GM12878 (cell line): ENCODE measurements at regions of chr1 and their contacts with region 1.

Region 1: GRCh38 chr1:212477014-212477679 is 44.4 kb downstream of the NENF start:
- DNase-seq: peak; percentile 65
- ATAC-seq: peak; percentile 97
- H3K4me3 ChIP-seq: no peak overlapping the region
- H3K27ac ChIP-seq: no peak overlapping the region; the same call in 1 of the 2 replicates
- H3K4me1 ChIP-seq: peaks cover 6% of the 10 kb centered on the region; the same call in 1 of the 2 replicates
- H3K27me3 ChIP-seq: no peaks in the 10 kb centered on the region
- CTCF ChIP-seq: peak; percentile 94 to 97 (median 96)
- EP300 ChIP-seq: no peak
- POLR2A ChIP-seq: no peak
- RAD21 ChIP-seq: peak; percentile 90

Region 2: DNA sequence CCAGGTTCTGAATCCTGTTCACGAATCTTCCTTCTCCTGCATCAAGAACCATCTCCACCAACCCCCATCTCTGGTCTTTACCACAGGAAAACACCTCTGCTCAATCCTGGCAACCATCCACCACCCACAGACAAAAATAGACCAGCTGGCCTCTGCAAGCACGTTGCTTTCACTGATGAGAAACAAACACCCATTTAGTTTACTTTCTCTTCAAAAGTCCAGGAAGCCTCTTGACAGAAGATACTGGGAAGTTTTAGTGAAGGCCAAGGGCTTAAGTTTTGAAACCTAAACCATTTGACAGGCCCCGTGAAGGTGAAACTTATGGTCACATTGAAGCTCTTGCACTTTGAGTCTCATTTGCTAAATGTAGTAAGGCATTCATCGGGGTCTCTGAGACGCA is 314.5 kb before region 1 on chr1:
- CTCF ChIA-PET with region 1: no interaction called
- POLR2A ChIA-PET with region 1: no interaction called
- RAD21 ChIA-PET with region 1: no interaction called
- SMC1A ChIA-PET with region 1: no interaction called
- in situ Hi-C with region 1: no loop called
- intact Hi-C with region 1: no loop called
- DNase-seq: peak; percentile 79
- ATAC-seq: peak; percentile 59
- H3K4me3 ChIP-seq: no peak overlapping the region
- H3K27ac ChIP-seq: peak overlapping the region; percentile 45
- H3K4me1 ChIP-seq: peaks cover 47% of the 10 kb centered on the region
- H3K27me3 ChIP-seq: no peaks in the 10 kb centered on the region
- CTCF ChIP-seq: no peak
- EP300 ChIP-seq: peak in 1 of 2 experiments; percentile 70; a peak in 2 of 4 replicates
- POLR2A ChIP-seq: no peak
- RAD21 ChIP-seq: no peak

Region 3: DNA sequence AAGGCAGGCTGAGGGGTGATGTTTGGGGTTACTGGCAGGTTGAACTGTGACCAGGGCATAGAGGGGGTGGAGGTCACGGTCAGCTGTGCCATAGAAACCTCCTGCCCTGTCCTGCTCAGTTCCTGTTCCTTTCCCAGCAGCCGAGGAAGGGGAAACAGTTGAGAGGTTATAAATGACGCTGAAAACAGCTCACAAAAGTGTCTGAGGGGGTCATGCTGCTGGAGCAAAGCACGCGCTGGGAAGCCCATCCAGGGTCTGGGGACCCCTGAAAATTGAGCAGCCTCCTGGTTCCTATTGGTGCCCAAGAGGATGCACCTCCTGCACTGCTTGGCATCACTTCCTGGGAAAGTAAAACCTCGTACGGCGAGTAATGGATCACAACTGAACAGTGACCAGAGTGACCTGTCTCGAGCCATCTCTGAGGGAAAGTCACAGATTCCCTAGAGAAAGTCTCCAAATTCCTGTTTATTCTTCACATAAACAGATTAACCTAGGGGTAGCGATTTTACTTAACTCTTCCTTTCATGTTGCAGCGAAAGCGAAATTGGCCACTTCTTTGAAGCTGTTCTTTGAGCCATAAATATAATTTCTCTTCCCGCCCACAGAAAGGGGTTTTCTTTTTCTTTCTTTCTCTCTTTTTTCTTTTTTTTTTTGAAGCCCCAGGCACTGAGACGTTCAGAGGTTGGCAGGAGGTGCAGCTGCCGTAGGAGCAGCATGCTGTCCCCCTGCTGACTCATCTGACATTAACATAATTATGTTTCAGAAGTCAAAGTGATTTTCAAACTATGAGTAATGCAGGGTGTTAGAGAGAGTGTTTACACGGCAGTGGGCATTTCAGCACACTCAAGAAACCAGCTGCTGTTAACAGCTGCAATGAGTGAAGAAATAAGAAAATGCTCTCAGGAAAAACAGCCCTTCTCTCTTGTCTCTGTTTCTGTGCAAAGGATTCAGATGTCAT is 89.7 kb after region 1 on chr1:
- CTCF ChIA-PET with region 1: interaction called, 10 read pairs
- POLR2A ChIA-PET with region 1: interaction called, 4 read pairs
- RAD21 ChIA-PET with region 1: interaction called, 16 read pairs
- SMC1A ChIA-PET with region 1: interaction called, 19 read pairs
- in situ Hi-C with region 1: no loop called
- intact Hi-C with region 1: loop called (anchors 5 kb)
- DNase-seq: peak; percentile 92
- ATAC-seq: peak; percentile 98
- H3K4me3 ChIP-seq: peak overlapping the region; percentile 58
- H3K27ac ChIP-seq: peak overlapping the region; percentile 72
- H3K4me1 ChIP-seq: peaks cover 20% of the 10 kb centered on the region
- H3K27me3 ChIP-seq: no peaks in the 10 kb centered on the region
- CTCF ChIP-seq: no peak
- EP300 ChIP-seq: peak; percentile 93
- POLR2A ChIP-seq: 0 out of 2 replicates have a peak, but pooled peaks have one; percentile 27
- RAD21 ChIP-seq: no peak

Region 4: DNA sequence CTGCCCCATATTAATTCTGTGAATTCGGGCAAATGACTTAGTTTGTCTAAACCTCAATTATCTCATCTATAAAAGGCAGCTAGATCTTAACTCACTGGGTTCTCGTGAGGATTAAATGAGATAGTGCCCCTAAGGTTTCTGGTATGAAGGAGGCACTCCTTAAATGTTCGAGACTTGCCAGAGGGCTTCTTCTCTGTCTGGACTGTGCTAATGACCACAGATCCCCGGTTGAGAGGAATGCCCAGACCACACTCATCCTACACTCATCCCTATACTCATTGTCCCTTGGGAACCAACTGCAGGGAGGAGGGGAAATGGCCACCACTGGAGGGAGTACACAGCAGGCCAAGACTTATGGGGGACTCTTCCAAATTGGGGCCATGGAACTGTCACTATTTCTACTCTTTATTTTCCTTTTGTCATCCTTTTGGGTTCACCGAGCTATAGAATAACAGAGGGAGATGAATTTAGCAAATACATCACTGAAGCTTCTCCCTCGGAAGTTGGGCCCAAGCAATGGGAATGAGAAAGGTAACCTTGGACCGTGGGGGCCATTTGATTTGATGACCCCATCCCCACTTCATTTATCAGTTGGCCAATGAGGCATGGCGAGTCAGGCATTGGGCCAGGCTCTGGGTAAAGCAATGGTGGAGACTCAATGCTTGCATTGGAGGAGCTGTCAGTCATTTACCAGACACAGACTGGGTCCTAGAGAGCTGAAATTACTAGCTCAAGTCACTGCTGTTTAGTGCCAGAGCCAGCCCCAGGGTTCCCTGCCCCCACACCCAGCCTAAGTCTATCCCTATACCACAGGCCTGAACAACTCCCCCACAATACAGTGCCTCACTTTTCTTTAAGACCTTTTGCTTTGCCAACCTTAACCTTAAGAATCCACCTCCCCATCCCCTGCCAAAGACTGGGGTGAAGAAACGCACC is 136.6 kb after region 1 on chr1:
- CTCF ChIA-PET with region 1: interaction called, 38 read pairs
- POLR2A ChIA-PET with region 1: interaction called, 11 read pairs
- RAD21 ChIA-PET with region 1: interaction called, 20 read pairs
- SMC1A ChIA-PET with region 1: interaction called, 24 read pairs
- in situ Hi-C with region 1: no loop called
- intact Hi-C with region 1: loop called (anchors 1 kb)
- DNase-seq: no peak
- ATAC-seq: peak; percentile 8
- H3K4me3 ChIP-seq: peak overlapping the region; percentile 65; the same call in 1 of the 2 replicates
- H3K27ac ChIP-seq: peak overlapping the region; percentile 66
- H3K4me1 ChIP-seq: peaks cover 27% of the 10 kb centered on the region
- H3K27me3 ChIP-seq: no peaks in the 10 kb centered on the region
- CTCF ChIP-seq: no peak
- EP300 ChIP-seq: no peak
- POLR2A ChIP-seq: no peak
- RAD21 ChIP-seq: no peak

Region 5: DNA sequence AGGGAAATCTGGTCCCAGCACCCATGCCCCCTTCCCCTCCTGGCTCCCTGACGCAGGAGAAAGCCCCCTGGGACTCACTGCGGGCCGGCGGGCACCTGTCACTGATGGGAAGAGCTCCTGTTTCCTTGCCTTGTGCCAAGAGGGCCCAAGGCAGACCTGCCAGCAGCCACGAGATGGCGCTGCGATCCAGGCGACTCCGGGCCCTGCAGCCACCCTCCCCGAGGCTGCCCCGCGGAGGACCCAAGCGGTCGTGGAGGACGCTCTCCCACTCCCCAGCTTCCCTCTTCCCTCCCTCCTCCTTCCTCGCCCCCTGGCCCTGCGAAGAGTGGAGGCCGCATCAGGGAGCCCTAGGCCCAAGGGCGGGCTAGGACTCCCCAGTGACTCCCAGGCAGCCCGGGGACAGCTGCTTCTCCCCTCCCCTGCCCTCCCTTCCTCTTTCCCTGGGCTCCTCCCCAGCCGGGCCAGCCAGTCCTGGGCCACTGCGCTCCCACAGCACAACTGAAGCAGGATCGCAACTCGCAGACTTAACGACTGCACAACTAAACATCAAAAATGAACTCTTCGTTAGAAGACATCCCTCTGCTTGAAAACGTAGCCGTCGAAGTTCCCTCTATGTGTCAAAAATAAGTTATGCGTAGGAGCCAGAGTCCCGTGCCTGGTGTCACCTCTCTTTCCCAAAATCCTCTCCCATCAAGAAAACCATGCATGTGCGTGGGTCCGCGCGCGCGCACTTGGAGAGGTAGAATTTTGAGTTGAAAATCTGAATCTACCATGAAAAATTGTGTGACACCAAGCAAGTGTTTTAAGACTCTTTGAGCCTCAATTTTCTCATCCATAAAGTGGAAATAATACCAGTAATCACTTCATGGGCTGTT is 188.3 kb after region 1 on chr1:
- CTCF ChIA-PET with region 1: interaction called, 82 read pairs
- POLR2A ChIA-PET with region 1: interaction called, 4 read pairs
- RAD21 ChIA-PET with region 1: interaction called, 66 read pairs
- SMC1A ChIA-PET with region 1: interaction called, 37 read pairs
- in situ Hi-C with region 1: no loop called
- intact Hi-C with region 1: loop called (anchors 1 kb)
- DNase-seq: no peak
- ATAC-seq: peak; percentile 98
- H3K4me3 ChIP-seq: peak overlapping the region; percentile 64
- H3K27ac ChIP-seq: peak overlapping the region; percentile 33; the same call in 1 of the 2 replicates
- H3K4me1 ChIP-seq: peaks cover 24% of the 10 kb centered on the region
- H3K27me3 ChIP-seq: no peaks in the 10 kb centered on the region
- CTCF ChIP-seq: peak; percentile 90 to 98 (median 94)
- EP300 ChIP-seq: no peak
- POLR2A ChIP-seq: no peak
- RAD21 ChIP-seq: peak; percentile 94

Region 6: DNA sequence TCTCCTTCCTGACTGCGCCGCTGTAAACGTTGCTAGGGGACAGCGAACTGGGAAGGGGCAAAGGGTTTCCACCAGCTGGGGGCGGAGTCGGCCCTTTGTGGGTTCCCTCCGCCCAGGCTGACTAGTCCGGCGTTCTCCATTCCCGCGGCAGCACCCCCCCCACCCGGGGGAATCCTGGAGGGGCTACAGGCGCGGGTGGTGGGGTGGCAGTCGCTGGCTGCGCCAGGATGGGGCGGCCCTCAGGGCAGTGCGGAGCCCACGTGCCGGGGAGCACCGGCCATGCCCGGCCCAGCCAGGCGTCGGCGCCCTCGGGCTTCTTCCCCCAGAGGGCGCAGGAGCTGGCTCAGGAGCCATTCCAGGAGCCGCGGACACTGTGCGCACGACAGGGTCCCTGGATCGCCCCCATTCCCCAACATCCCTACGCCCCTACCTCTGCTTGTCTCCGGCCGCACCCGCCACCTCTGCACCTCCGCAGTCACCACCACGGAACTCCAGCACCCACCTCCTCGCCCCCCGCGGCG is 222.0 kb after region 1 on chr1:
- CTCF ChIA-PET with region 1: interaction called, 22 read pairs
- POLR2A ChIA-PET with region 1: interaction called, 4 read pairs
- RAD21 ChIA-PET with region 1: interaction called, 27 read pairs
- SMC1A ChIA-PET with region 1: interaction called, 8 read pairs
- in situ Hi-C with region 1: no loop called
- intact Hi-C with region 1: no loop called
- DNase-seq: no peak
- ATAC-seq: peak; percentile 81
- H3K4me3 ChIP-seq: peak overlapping the region; percentile 82
- H3K27ac ChIP-seq: no peak overlapping the region
- H3K4me1 ChIP-seq: peaks cover 27% of the 10 kb centered on the region
- H3K27me3 ChIP-seq: no peaks in the 10 kb centered on the region
- CTCF ChIP-seq: peak; percentile 48 to 79 (median 71)
- EP300 ChIP-seq: no peak
- POLR2A ChIP-seq: no peak
- RAD21 ChIP-seq: peak; percentile 51

Region 7: GRCh38 chr1:212909652-212910063 is 432.5 kb after region 1 on chr1:
- CTCF ChIA-PET with region 1: no interaction called
- POLR2A ChIA-PET with region 1: no interaction called
- RAD21 ChIA-PET with region 1: no interaction called
- SMC1A ChIA-PET with region 1: no interaction called
- in situ Hi-C with region 1: no loop called
- intact Hi-C with region 1: no loop called
- DNase-seq: no peak
- ATAC-seq: no peak
- H3K4me3 ChIP-seq: no peak overlapping the region
- H3K27ac ChIP-seq: no peak overlapping the region
- H3K4me1 ChIP-seq: no peaks in the 10 kb centered on the region
- H3K27me3 ChIP-seq: no peaks in the 10 kb centered on the region
- CTCF ChIP-seq: no peak
- EP300 ChIP-seq: no peak
- POLR2A ChIP-seq: no peak
- RAD21 ChIP-seq: no peak

Region 8: GRCh38 chr1:212994926-212995325 is 517.8 kb after region 1 on chr1:
- CTCF ChIA-PET with region 1: interaction called, 24 read pairs
- POLR2A ChIA-PET with region 1: no interaction called
- RAD21 ChIA-PET with region 1: no interaction called
- SMC1A ChIA-PET with region 1: interaction called, 6 read pairs
- in situ Hi-C with region 1: no loop called
- intact Hi-C with region 1: loop called (anchors 5 kb)
- DNase-seq: no peak
- ATAC-seq: no peak
- H3K4me3 ChIP-seq: no peak overlapping the region
- H3K27ac ChIP-seq: no peak overlapping the region
- H3K4me1 ChIP-seq: no peaks in the 10 kb centered on the region
- H3K27me3 ChIP-seq: no peaks in the 10 kb centered on the region
- CTCF ChIP-seq: no peak
- EP300 ChIP-seq: no peak
- POLR2A ChIP-seq: no peak
- RAD21 ChIP-seq: no peak